Transverse colon (tissue), 4 donors: ENCODE measurements at regions of chr14 and their contacts with region 1.

Region 1: GRCh38 chr14:106141242-106142220 is 615.1 kb downstream of the TMEM121 start:
- DNase-seq: no peak
- H3K4me3 ChIP-seq: no peak overlapping the region
- H3K27ac ChIP-seq: no peak overlapping the region
- H3K4me1 ChIP-seq: no peaks in the 10 kb centered on the region
- H3K27me3 ChIP-seq: no peaks in the 10 kb centered on the region
- CTCF ChIP-seq: no peak
- EP300 ChIP-seq: no peak
- POLR2A ChIP-seq: no peak

Region 2: DNA sequence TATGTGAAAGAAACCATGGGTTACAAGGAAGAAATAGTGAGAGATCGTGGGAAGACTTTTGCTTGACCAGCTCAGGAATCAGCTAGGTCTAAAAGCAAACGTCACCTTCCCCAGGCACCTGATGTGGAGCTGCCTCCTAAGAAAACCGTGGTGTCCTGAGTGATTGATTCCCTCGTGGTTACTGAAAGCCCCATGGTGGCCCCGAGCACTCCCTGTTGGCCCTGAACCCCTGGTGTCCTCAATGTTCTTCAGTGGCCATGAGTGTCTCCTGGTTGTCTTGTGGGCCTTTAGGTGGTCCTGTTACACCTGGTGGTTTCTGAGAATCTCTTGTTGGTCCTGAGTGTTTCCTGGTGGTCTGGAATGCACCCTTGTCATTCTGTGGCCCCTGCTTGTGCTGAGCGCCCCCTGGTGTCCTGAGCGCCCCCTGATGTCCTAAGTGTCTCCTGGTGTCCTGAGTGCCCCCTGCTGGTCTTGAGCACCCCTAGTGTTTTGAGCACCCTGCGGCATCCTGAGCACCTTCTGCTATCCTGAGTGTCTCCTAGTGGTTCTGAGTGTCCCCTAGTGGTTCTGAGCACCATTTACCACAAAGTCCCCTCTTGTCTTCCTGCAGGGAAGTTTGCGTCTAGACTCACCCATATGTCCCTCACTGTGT is 96.5 kb before region 1 on chr14:
- in situ Hi-C with region 1: loop called in 1 of 4 experiments (anchors 25 kb)
- intact Hi-C with region 1: no loop called
- DNase-seq: peak; percentile 64
- H3K4me3 ChIP-seq: no peak overlapping the region
- H3K27ac ChIP-seq: no peak overlapping the region
- H3K4me1 ChIP-seq: no peaks in the 10 kb centered on the region
- H3K27me3 ChIP-seq: peaks cover under 1% of the 10 kb centered on the region
- CTCF ChIP-seq: peak in 4 of 5 experiments; percentile 15 to 37 (median 32)
- EP300 ChIP-seq: no peak
- POLR2A ChIP-seq: no peak

Region 3: GRCh38 chr14:106268013-106268727 is 126.6 kb after region 1 on chr14:
- in situ Hi-C with region 1: no loop called
- intact Hi-C with region 1: no loop called
- DNase-seq: peak; percentile 48
- H3K4me3 ChIP-seq: no peak overlapping the region
- H3K27ac ChIP-seq: no peak overlapping the region
- H3K4me1 ChIP-seq: no peaks in the 10 kb centered on the region
- H3K27me3 ChIP-seq: peaks cover 3% of the 10 kb centered on the region
- CTCF ChIP-seq: no peak
- EP300 ChIP-seq: no peak
- POLR2A ChIP-seq: no peak